Transverse colon (tissue), 4 donors: ENCODE measurements at regions of chr1 and their contacts with region 1.

Region 1: GRCh38 chr1:43513436-43514173 is 17.1 kb upstream of the PTPRF start:
- DNase-seq: no peak
- H3K4me3 ChIP-seq: no peak overlapping the region
- H3K27ac ChIP-seq: peak overlapping the region; percentile 79 to 84 (median 81)
- H3K4me1 ChIP-seq: peaks cover 0 to 27% (median 17%) of the 10 kb centered on the region in 4 donors
- H3K27me3 ChIP-seq: no peaks in the 10 kb centered on the region
- CTCF ChIP-seq: no peak
- EP300 ChIP-seq: no peak
- POLR2A ChIP-seq: no peak

Region 2: DNA sequence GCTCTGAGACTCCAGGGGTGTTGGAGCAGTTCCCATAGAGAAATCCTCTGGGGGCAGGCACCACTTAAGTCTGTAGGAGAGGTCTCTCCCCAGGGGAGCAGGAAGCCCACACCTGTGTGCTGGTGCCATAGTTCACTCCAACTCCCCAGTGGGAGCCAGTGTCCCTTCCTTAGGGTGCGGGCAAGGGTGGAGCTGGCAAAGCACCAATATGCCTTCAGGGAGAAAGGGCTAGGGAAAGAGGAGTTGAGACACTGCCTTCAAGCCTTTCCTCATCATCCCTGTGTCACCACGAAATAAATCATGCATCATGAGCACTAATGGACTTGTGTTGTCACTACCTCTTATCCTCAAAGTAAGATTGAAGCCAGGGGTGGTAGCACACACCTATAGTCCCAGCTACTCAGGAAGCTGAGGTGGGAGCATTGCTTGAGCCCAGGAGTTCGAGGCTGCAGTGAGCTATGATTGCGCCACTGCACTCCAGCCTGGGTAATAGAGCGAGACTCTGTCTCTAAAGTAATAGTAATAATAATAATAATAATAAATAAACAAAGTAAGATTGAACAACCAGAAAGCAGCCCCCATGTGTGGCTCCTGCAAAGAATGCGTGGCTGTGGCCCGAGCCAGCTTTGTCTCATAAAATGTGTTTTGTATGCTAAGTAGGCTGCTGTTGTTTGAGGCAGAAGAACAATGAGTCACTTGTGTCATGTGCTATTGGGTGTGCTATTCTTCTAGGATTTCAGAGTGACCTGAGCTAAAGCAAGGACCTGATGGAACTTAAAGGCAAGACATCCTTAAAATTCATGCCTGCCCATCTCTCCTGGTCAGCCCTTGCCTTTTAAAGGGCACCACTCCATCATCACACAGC is 219.5 kb before region 1 on chr1:
- in situ Hi-C with region 1: no loop called
- intact Hi-C with region 1: no loop called
- DNase-seq: peak; percentile 83
- H3K4me3 ChIP-seq: no peak overlapping the region
- H3K27ac ChIP-seq: peak overlapping the region; percentile 55 to 79 (median 64)
- H3K4me1 ChIP-seq: peaks cover 21 to 44% (median 28%) of the 10 kb centered on the region in 4 donors
- H3K27me3 ChIP-seq: no peaks in the 10 kb centered on the region
- CTCF ChIP-seq: no peak
- EP300 ChIP-seq: no peak
- POLR2A ChIP-seq: no peak

Region 3: DNA sequence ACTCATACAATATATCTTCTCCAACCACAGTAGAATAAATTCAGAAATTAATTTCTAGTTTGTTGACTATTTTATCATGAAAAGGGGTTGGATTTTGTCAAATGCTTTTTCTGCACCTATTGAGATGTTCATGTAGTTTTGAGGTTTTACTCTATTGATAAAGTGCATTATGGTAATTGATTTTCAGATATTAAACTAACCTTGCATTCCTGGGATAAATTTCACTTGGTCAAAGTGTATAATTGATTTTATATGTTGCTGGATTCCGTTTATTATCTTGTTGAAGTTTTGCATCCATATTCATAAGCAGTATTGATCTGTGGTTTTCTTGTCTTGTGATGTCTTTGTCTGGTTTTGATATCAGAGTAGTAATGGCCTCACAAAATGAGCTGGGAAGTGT is 25.4 kb before region 1 on chr1:
- in situ Hi-C with region 1: no loop called
- intact Hi-C with region 1: loop called (anchors 1 kb)
- DNase-seq: no peak
- H3K4me3 ChIP-seq: no peak overlapping the region
- H3K27ac ChIP-seq: no peak overlapping the region
- H3K4me1 ChIP-seq: no peaks in the 10 kb centered on the region
- H3K27me3 ChIP-seq: no peaks in the 10 kb centered on the region
- CTCF ChIP-seq: no peak
- EP300 ChIP-seq: no peak
- POLR2A ChIP-seq: no peak

Region 4: GRCh38 chr1:43554444-43554992 is 40.9 kb after region 1 on chr1:
- in situ Hi-C with region 1: no loop called
- intact Hi-C with region 1: no loop called
- DNase-seq: no peak
- H3K4me3 ChIP-seq: no peak overlapping the region
- H3K27ac ChIP-seq: peak overlapping the region; percentile 15 to 94 (median 90)
- H3K4me1 ChIP-seq: peaks cover 54 to 69% (median 65%) of the 10 kb centered on the region in 4 donors
- H3K27me3 ChIP-seq: no peaks in the 10 kb centered on the region
- CTCF ChIP-seq: peak in 2 of 5 experiments; percentile 25 to 33
- EP300 ChIP-seq: no peak
- POLR2A ChIP-seq: no peak